Right ventricle myocardium inferior (tissue), 1 donor: ENCODE measurements at regions of chr4 and their contacts with region 1.

Region 1: DNA sequence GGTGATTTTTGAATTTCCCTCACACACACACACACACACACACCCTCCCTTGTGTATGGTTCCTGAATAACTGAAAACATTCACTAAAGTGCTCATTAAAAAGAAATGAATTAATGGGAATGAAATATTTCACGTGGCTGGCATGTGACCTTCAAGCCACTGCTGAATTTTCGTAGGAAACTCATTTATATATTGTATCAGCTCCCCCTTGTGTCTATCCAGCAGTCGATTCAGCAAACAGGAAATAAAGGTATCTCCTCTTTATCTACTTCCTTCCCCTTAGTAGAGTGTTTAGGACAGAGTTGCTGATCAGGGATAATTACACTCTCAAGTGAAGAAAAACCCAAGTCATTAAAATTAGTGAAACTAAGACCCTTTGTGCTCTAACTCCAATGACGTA is 912.6 kb upstream of the LCORL start:
- DNase-seq: no peak
- ATAC-seq: no peak

Region 2: GRCh38 chr4:18689308-18690115 is 244.7 kb before region 1 on chr4:
- intact Hi-C with region 1: loop called (anchors 1 kb)
- DNase-seq: no peak
- ATAC-seq: peak; percentile 46

Region 3: GRCh38 chr4:18722748-18723191 is 211.4 kb before region 1 on chr4:
- intact Hi-C with region 1: no loop called
- DNase-seq: no peak
- ATAC-seq: no peak

Region 4: GRCh38 chr4:18733961-18734360 is 200.2 kb before region 1 on chr4:
- intact Hi-C with region 1: loop called (anchors 1 kb)
- DNase-seq: no peak
- ATAC-seq: no peak

Region 5: GRCh38 chr4:19117022-19117421 is 182.8 kb after region 1 on chr4:
- intact Hi-C with region 1: no loop called
- DNase-seq: no peak
- ATAC-seq: no peak